ENCODE measurements at regions of chr6 and their contacts with region 1.

Region 1: GRCh38 chr6:109073344-109074132 is 21.1 kb downstream of the SESN1 start:
- DNase-seq: peak; percentile 67 to 74 (median 71)
- H3K4me3 ChIP-seq: no peak overlapping the region
- H3K4me3 Mint-ChIP-seq: peak overlapping the region in 6 of 8 donors; percentile 20 to 71 (median 51)
- H3K27ac ChIP-seq: no peak overlapping the region
- H3K27ac Mint-ChIP-seq: peak overlapping the region in 4 of 7 donors; percentile 1 to 72 (median 34)
- H3K4me1 ChIP-seq: peaks cover 34% of the 10 kb centered on the region
- H3K4me1 Mint-ChIP-seq: peaks cover 24 to 39% (median 34%) of the 10 kb centered on the region in 4 donors
- H3K27me3 ChIP-seq: no peaks in the 10 kb centered on the region
- H3K27me3 Mint-ChIP-seq: no peaks in the 10 kb centered on the region

Region 2: DNA sequence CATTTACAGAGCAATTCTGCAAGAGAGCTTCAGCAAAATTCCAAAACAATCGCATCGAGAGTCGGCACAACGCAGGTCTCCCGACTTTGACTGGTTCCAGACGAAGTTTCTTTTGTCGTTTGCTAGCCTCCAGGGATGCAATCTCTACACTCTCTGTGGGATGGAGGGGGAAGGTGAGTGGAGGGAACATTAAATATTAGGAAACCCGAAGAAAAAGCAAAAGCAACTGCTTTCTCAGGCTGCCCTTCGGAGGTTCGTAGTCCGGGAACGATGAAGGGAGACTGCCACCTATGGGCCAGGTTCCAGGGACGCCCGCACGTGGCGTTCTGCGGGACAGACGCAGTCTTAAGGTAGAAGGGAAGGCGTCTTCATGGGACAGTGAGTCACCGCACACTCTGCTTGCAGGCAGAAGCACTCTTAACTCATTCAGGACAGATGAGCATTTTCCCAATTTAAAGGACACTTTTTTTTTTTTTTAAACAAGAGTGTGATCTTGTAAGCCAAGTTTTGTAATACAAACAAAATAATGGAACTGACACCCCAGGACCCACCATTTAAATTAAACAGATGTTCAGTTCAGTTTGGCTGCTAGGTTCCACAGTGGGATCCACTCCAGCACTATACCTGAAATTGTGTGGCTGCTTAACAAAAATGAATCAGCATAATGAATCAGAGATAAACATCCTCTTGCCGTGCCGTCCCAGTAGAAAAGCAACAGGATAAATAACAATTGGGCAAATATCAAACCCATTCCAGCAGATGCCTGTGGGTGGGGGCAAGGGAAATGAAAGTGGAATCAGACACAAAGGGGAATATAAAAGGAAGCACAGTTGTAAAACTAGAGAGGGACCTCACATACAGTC is 291.1 kb before region 1 on chr6:
- CTCF ChIA-PET with region 1: interaction called, 8 read pairs
- POLR2A ChIA-PET with region 1: no interaction called
- intact Hi-C with region 1: loop called (anchors 1 kb)
- DNase-seq: peak; percentile 69 to 74 (median 72)
- H3K4me3 ChIP-seq: peak overlapping the region in 1 of 2 donors; percentile 40
- H3K4me3 Mint-ChIP-seq: peak overlapping the region; percentile 78 to 93 (median 87)
- H3K27ac ChIP-seq: no peak overlapping the region
- H3K27ac Mint-ChIP-seq: peak overlapping the region in 5 of 7 donors; percentile 24 to 78 (median 47)
- H3K4me1 ChIP-seq: peaks cover 5% of the 10 kb centered on the region
- H3K4me1 Mint-ChIP-seq: peaks cover 4 to 11% (median 7%) of the 10 kb centered on the region in 4 donors
- H3K27me3 ChIP-seq: no peaks in the 10 kb centered on the region
- H3K27me3 Mint-ChIP-seq: no peaks in the 10 kb centered on the region

Region 3: GRCh38 chr6:108896111-108896661 is 177.4 kb before region 1 on chr6:
- CTCF ChIA-PET with region 1: interaction called, 58 read pairs
- POLR2A ChIA-PET with region 1: interaction called, 3 read pairs
- intact Hi-C with region 1: loop called (anchors 1 kb)
- DNase-seq: peak; percentile 49 to 65 (median 53)
- H3K4me3 ChIP-seq: peak overlapping the region in 1 of 2 donors; percentile 2
- H3K4me3 Mint-ChIP-seq: peak overlapping the region; percentile 67 to 83 (median 78)
- H3K27ac ChIP-seq: peak overlapping the region; percentile 27
- H3K27ac Mint-ChIP-seq: peak overlapping the region; percentile 74 to 98 (median 94)
- H3K4me1 ChIP-seq: peaks cover 57% of the 10 kb centered on the region
- H3K4me1 Mint-ChIP-seq: peaks cover 25 to 53% (median 38%) of the 10 kb centered on the region in 4 donors
- H3K27me3 ChIP-seq: no peaks in the 10 kb centered on the region
- H3K27me3 Mint-ChIP-seq: no peaks in the 10 kb centered on the region

Region 4: GRCh38 chr6:108921547-108922361 is 151.8 kb before region 1 on chr6:
- CTCF ChIA-PET with region 1: interaction called, 52 read pairs
- POLR2A ChIA-PET with region 1: no interaction called
- intact Hi-C with region 1: no loop called
- DNase-seq: no peak
- H3K4me3 ChIP-seq: no peak overlapping the region
- H3K4me3 Mint-ChIP-seq: peak overlapping the region in 2 of 8 donors; percentile 4 to 25
- H3K27ac ChIP-seq: no peak overlapping the region
- H3K27ac Mint-ChIP-seq: peak overlapping the region in 6 of 7 donors; percentile 1 to 68 (median 26)
- H3K4me1 ChIP-seq: peaks cover 40% of the 10 kb centered on the region
- H3K4me1 Mint-ChIP-seq: peaks cover 25 to 61% (median 37%) of the 10 kb centered on the region in 4 donors
- H3K27me3 ChIP-seq: no peaks in the 10 kb centered on the region
- H3K27me3 Mint-ChIP-seq: no peaks in the 10 kb centered on the region

Region 5: DNA sequence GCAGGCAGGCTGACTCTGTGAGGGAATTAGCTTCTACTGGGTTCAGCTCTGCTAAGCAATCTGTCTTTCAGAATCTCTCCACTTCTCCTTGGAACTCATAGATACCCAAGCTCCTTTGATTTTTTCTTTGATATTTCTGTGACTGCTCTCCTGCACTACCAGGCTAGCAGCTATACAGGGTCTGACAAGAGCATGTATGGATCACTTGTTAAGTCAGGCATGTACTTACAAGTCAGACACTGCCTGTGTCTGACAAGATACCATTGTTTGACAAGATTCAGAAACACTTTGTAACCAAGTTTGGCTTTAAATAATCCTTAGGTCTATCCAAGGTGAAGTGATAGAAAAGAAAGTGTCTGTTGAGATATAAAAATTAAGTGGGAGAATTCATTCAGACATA is 58.4 kb before region 1 on chr6:
- CTCF ChIA-PET with region 1: interaction called, 61 read pairs
- POLR2A ChIA-PET with region 1: interaction called, 58 read pairs
- intact Hi-C with region 1: no loop called
- DNase-seq: no peak
- H3K4me3 ChIP-seq: no peak overlapping the region
- H3K4me3 Mint-ChIP-seq: peak overlapping the region in 2 of 8 donors; percentile 10 to 61
- H3K27ac ChIP-seq: no peak overlapping the region
- H3K27ac Mint-ChIP-seq: peak overlapping the region; percentile 9 to 76 (median 33)
- H3K4me1 ChIP-seq: peaks cover 53% of the 10 kb centered on the region
- H3K4me1 Mint-ChIP-seq: peaks cover 37 to 63% (median 48%) of the 10 kb centered on the region in 4 donors
- H3K27me3 ChIP-seq: no peaks in the 10 kb centered on the region
- H3K27me3 Mint-ChIP-seq: no peaks in the 10 kb centered on the region

Region 6: DNA sequence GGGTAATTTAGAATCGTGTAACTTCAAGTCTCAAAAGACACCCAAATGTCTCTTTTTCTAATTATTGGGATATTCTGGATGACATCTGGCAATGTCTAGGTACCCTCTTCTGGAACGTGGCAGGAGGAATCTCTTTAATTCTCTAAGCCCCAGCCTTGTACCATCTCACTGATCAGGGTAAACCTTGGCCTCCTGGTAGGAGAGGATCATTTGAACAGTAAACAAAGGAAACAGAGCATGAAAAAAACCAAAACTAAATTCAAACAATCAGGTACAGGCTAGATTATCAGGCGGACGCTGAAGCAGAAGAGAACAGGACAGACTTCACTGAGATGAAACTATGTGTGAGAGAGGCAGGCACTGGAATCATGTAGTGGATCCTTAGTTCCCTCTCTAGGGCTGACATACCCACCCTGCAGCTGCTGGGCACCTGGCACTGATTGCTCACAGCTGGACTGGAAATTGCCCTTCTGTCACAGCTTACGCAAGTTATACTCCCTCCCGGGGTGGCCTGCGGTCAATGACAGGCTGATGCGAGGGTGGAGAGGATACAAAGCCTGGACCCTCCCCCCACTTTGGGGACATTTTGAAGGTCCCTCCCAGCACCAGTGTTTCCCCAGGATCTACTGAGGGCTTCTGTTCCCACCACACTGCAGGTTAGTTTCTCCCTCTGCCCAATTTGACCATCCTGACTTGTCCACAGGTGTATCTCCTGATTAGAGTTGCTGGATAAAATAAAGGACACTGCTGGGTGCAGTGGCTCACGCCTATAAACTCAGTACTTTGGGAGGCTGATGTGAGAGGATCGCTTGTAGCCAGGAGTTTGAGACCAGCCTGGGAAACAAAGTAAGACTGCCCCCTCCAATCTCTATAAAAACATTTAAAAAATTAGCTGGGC is 430.0 kb after region 1 on chr6:
- CTCF ChIA-PET with region 1: no interaction called
- POLR2A ChIA-PET with region 1: no interaction called
- intact Hi-C with region 1: no loop called
- DNase-seq: no peak
- H3K4me3 ChIP-seq: no peak overlapping the region
- H3K4me3 Mint-ChIP-seq: no peak overlapping the region
- H3K27ac ChIP-seq: no peak overlapping the region
- H3K27ac Mint-ChIP-seq: no peak overlapping the region
- H3K4me1 ChIP-seq: no peaks in the 10 kb centered on the region
- H3K4me1 Mint-ChIP-seq: no peaks in the 10 kb centered on the region
- H3K27me3 ChIP-seq: no peaks in the 10 kb centered on the region
- H3K27me3 Mint-ChIP-seq: peaks cover 1 to 4% of the 10 kb centered on the region in 2 donors

Measured in CD4-positive, alpha-beta memory T cell (primary cell).